Esophagus muscularis mucosa (tissue), 4 donors: ENCODE measurements at regions of chr16 and their contacts with region 1.

Region 1: DNA sequence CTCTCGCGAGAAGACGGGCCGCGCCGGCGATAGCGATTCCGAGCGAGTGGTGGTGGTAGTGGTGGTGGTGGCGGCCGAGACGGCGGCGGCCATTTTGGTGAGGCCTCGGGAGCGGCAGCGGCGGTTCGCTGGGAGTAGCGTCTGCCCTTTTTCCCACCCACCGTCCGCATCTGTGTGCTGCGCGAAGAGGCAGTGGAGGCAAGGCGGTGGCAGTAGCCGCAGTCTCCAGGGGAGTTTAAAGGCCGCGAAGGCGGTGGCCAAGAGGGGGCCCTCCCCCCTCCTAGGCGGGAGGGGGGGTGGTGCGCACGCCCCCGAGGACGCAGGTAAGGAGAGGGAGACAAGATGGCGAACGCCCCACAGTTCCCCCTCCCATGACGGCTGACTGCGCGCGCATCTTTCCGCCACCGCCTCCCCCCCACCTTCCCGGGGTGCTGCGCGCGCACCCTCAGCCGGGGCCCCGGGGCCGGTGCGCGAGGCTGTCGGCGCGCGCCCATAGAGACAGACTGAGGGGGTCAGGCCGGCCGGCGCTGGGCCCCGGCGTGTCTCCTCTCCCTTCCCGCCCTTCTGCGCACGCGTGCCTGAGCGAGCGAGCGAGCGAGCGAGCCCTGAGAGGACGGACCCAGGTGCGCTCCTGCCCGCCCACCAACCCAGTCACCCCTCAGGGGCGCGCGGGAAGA is 694 bp upstream of the SRCAP start:
- DNase-seq: peak; percentile 99
- H3K4me3 ChIP-seq: peak overlapping the region; percentile 88 to 100 (median 98)
- H3K27ac ChIP-seq: peak overlapping the region; percentile 98 to 100 (median 100)
- H3K4me1 ChIP-seq: peaks cover 27 to 37% (median 34%) of the 10 kb centered on the region in 4 donors
- H3K27me3 ChIP-seq: no peaks in the 10 kb centered on the region
- CTCF ChIP-seq: peak in 1 of 3 experiments; percentile 18
- EP300 ChIP-seq: no peak
- POLR2A ChIP-seq: peak; percentile 57

Region 2: GRCh38 chr16:30429678-30430427 is 268.4 kb before region 1 on chr16 and contains the start of gene DCTPP1:
- intact Hi-C with region 1: loop called (anchors 10 kb)
- DNase-seq: peak; percentile 98
- H3K4me3 ChIP-seq: peak within 1 kb of the TSS; percentile 67 to 70 (median 68)
- H3K27ac ChIP-seq: peak within 1 kb of the TSS; percentile 75 to 88 (median 80)
- H3K4me1 ChIP-seq: peaks cover 16 to 23% (median 19%) of the 10 kb centered on the region in 4 donors
- H3K27me3 ChIP-seq: no peaks in the 10 kb centered on the region
- CTCF ChIP-seq: peak; percentile 68 to 90 (median 77)
- EP300 ChIP-seq: no peak
- POLR2A ChIP-seq: no peak
- total RNA-seq, gene DCTPP1: 11.1 to 21.7 (median 14.1) TPM

Region 3: DNA sequence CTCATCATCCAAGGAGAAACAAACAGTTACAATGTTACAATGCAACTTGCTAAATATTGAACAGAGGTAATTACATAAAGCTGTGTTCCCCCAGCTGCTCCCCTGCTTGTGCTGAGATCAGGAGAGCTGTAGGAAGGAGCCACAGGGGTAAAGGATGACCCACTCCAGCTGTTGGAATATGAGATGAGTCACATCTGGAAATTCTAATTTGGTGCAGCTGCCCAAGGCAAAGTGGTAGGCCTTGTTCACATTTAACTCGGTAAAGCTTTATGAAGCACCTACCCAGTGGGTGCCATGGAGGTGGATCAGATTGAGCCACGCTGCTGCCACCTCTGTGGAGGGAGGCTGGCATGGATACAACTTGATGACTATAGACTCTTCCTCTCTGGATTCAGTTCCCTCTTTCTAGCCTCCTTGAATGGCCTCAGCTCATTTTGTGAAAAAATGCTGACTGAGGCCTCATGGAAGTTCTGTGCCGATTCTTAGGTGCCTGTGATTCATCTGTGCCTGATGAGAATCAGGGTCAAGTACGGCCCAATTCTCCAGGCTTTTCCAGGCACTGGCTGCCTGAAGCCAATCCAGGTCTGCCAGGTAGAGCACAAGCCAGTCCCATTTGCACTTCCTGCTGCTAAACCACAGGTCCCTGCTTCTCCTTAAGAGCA is 95.5 kb before region 1 on chr16:
- intact Hi-C with region 1: no loop called
- DNase-seq: no peak
- H3K4me3 ChIP-seq: no peak overlapping the region
- H3K27ac ChIP-seq: peak overlapping the region in 1 of 4 donors; percentile 2
- H3K4me1 ChIP-seq: peaks cover 8 to 30% (median 16%) of the 10 kb centered on the region in 4 donors
- H3K27me3 ChIP-seq: no peaks in the 10 kb centered on the region
- CTCF ChIP-seq: no peak
- EP300 ChIP-seq: no peak
- POLR2A ChIP-seq: no peak

Region 4: DNA sequence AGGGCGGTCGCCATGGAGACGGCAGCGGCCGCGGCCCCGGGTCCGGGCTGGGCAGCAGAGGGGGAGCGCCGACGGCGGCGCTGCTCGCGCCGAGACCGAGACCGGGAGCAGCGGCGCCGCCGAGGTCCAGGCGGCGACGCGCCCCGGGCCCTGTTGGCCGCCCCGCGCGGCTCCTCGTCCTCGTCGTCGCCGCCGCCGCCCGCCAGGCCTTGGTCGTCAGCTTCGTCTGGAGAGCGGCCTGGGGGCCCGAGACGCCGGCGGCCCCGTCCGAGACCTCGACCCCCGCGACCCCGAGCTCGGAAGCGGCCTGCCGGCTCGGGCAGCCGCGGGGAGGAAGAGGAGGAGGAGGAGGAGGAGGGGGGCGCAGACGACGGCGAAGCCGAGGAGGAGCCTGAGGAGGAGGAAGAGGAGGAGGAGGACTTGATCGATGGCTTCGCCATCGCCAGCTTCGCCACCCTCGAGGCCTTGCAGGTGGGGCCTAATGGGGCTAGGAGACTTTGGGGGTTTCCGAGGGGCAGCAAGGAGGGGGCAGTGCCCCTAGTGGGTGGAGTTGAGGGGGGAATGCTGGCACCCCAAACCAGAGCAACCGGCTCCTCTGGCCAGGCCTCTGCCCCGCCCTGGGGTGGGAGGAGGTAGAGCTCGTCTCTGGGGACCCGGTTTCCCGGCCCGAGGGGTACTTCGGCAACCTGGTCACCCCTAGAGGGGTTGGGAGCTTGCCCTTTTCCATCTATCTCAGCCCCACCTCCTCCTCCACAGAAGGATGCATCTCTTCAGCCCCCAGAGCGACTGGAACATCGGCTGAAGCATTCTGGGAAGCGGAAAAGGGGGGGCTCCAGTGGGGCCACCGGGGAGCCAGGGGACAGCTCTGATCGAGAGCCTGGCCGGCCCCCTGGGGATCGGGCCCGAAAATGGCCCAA is 38.5 kb before region 1 on chr16:
- intact Hi-C with region 1: loop called (anchors 5 kb)
- DNase-seq: no peak
- H3K4me3 ChIP-seq: peak overlapping the region; percentile 71 to 95 (median 90)
- H3K27ac ChIP-seq: peak overlapping the region; percentile 92 to 99 (median 98)
- H3K4me1 ChIP-seq: peaks cover 32 to 71% (median 65%) of the 10 kb centered on the region in 4 donors
- H3K27me3 ChIP-seq: no peaks in the 10 kb centered on the region
- CTCF ChIP-seq: no peak
- EP300 ChIP-seq: no peak
- POLR2A ChIP-seq: no peak

Region 5: GRCh38 chr16:30786936-30787612 is 88.8 kb after region 1 on chr16 and contains the start of gene ZNF629:
- intact Hi-C with region 1: no loop called
- DNase-seq: no peak
- H3K4me3 ChIP-seq: peak within 1 kb of the TSS; percentile 77 to 99 (median 98)
- H3K27ac ChIP-seq: peak within 1 kb of the TSS; percentile 91 to 97 (median 94)
- H3K4me1 ChIP-seq: peaks cover 19 to 39% (median 29%) of the 10 kb centered on the region in 4 donors
- H3K27me3 ChIP-seq: no peaks in the 10 kb centered on the region
- CTCF ChIP-seq: no peak
- EP300 ChIP-seq: no peak
- POLR2A ChIP-seq: no peak
- total RNA-seq, gene ZNF629: 10.4 to 17.1 (median 15.4) TPM